WTC11 (cell line): ENCODE measurements at regions of chr2 and their contacts with region 1.

Region 1: GRCh38 chr2:127423880-127424279 is 5.7 kb downstream of the PROC start:
- DNase-seq: no peak
- ATAC-seq: no peak
- H3K4me3 Mint-ChIP-seq: peak overlapping the region; percentile 63
- H3K27ac Mint-ChIP-seq: no peak overlapping the region
- H3K4me1 Mint-ChIP-seq: peaks cover 15% of the 10 kb centered on the region
- H3K27me3 Mint-ChIP-seq: peaks cover 48% of the 10 kb centered on the region
- CTCF ChIP-seq: no peak

Region 2: DNA sequence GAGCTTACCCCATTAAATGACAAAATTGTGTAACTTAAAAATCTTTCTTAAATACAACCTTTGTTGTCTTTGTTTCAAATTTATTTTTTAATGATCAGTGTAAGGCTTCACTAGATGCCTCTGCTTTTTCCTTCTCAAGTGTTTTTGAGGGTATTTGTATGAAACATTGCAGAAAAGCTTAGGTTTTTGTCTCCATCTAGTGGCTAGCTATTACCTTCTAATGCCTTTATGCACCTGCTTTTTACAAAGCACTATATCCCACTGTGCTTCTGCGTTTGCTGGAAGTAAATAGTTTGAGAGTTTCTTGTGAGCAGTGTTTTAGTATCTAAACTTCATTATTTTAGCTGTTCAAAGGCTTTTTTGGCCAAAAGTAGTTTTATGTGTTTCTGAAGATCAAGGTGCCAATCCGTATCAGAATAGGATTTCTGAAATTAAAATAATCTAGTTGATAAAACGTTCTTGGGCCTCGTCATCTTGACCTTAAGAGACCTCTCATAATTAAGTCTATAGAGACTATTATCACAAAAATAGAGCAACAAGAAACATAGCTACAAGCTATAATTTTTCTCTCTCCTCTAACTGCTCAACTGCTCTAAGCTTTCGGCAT is 55.4 kb after region 1 on chr2:
- CTCF ChIA-PET with region 1: interaction called, 10 read pairs
- POLR2A ChIA-PET with region 1: no interaction called
- DNase-seq: no peak
- ATAC-seq: peak; percentile 56
- H3K4me3 Mint-ChIP-seq: no peak overlapping the region
- H3K27ac Mint-ChIP-seq: no peak overlapping the region
- H3K4me1 Mint-ChIP-seq: peaks cover 34% of the 10 kb centered on the region
- H3K27me3 Mint-ChIP-seq: no peaks in the 10 kb centered on the region
- CTCF ChIP-seq: peak; percentile 39; the same call in 1 of the 2 replicates